ENCODE measurements at regions of chr7 and their contacts with region 1.

Region 1: GRCh38 chr7:103148994-103149807 is at the start of gene NAPEPLD:
- DNase-seq: peak; percentile 90
- total RNA-seq, gene NAPEPLD: 8.4 TPM

Region 2: GRCh38 chr7:103074519-103075336 is 74.5 kb before region 1 on chr7 and contains the starts of genes ARMC10 and FBXL13:
- intact Hi-C with region 1: loop called (anchors 2 kb)
- DNase-seq: peak; percentile 95
- total RNA-seq, gene ARMC10: 27.9 TPM
- total RNA-seq, gene FBXL13: 0.32 TPM

Region 3: GRCh38 chr7:103296901-103297836 is 148.0 kb after region 1 on chr7 and contains the start of gene PMPCB:
- intact Hi-C with region 1: loop called (anchors 2 kb)
- DNase-seq: peak; percentile 97
- total RNA-seq, gene PMPCB: 68.2 TPM

Measured in cardiac septum (tissue), 1 donor.